ENCODE measurements at regions of chr18 and their contacts with region 1.

Region 1: DNA sequence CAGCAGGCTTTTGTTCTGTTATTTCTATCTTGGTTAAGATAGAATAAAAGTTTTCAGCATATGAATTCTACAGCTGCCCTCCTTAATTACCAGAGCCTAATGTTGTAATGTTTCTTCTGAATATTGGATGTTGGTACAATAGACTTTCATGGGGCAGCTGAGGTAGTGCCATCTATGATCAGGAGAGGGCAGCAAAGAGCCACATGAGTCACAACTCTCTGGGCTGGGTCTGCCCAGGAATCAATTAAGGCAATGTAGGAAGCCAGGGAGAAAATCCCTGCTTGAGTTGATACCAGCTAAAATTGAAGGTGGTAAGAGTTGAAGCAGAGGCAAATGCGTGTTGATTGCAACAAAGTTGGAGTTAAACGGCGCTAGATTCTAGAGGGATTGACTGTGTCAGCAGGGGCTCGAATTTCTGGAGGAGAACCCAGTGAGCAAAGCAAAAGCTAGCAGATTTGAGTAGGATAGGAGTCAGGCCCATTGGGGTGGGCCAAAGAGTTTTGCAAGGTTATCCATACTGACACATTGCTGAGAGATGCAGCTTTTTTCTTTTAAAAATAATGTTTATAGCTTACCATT is 10.6 kb upstream of the MC5R start:
- DNase-seq: no peak
- H3K4me3 ChIP-seq: no peak overlapping the region
- CTCF ChIP-seq: peak; percentile 82

Region 2: GRCh38 chr18:13797157-13797611 is 16.2 kb before region 1 on chr18:
- CTCF ChIA-PET with region 1: interaction called, 23 read pairs
- POLR2A ChIA-PET with region 1: no interaction called
- DNase-seq: no peak
- H3K4me3 ChIP-seq: no peak overlapping the region
- CTCF ChIP-seq: no peak

Region 3: GRCh38 chr18:13823707-13824395 is 10.5 kb after region 1 on chr18 and contains the start of gene MC5R:
- CTCF ChIA-PET with region 1: interaction called, 25 read pairs
- POLR2A ChIA-PET with region 1: interaction called, 3 read pairs
- DNase-seq: no peak
- H3K4me3 ChIP-seq: peak within 1 kb of the TSS; percentile 45
- CTCF ChIP-seq: peak; percentile 93

Measured in AG04449 (cell line).